ENCODE measurements at regions of chr19 and their contacts with region 1.

Region 1: GRCh38 chr19:38647368-38647965 is at the start of gene ACTN4:
- DNase-seq: peak; percentile 100
- H3K4me3 Mint-ChIP-seq: peak within 1 kb of the TSS; percentile 89
- H3K27ac Mint-ChIP-seq: peak within 1 kb of the TSS; percentile 80
- H3K4me1 Mint-ChIP-seq: peaks cover 45% of the 10 kb centered on the region
- H3K27me3 Mint-ChIP-seq: no peaks in the 10 kb centered on the region
- total RNA-seq, gene ACTN4: 532 to 534 TPM

Region 2: DNA sequence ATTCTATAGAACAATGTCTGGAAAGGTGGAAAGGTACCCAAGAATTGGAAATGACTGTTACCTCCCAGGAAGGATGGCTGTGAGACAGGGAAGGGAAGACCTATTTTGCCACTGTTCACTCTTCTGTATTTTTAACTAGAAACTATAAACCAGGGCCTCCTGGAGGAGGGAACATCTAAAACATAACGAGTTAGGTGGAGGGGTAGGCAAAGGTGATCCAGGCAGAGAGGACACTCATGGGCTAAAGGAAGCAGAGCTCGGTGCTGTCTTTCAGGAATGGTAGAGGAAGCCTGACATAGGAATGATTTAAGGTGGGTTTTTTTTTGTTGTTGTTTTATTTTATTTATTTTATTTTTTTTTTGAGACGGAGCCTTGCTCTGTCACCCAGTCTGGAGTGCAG is 22.6 kb before region 1 on chr19:
- CTCF ChIA-PET with region 1: no interaction called
- POLR2A ChIA-PET with region 1: no interaction called
- DNase-seq: no peak
- H3K4me3 Mint-ChIP-seq: no peak overlapping the region
- H3K27ac Mint-ChIP-seq: peak overlapping the region; percentile 21
- H3K4me1 Mint-ChIP-seq: peaks cover 12% of the 10 kb centered on the region
- H3K27me3 Mint-ChIP-seq: no peaks in the 10 kb centered on the region

Region 3: GRCh38 chr19:38634757-38635482 is 12.5 kb before region 1 on chr19:
- CTCF ChIA-PET with region 1: interaction called, 34 read pairs
- POLR2A ChIA-PET with region 1: interaction called, 30 read pairs
- DNase-seq: peak; percentile 81
- H3K4me3 Mint-ChIP-seq: no peak overlapping the region
- H3K27ac Mint-ChIP-seq: peak overlapping the region; percentile 87
- H3K4me1 Mint-ChIP-seq: peaks cover 50% of the 10 kb centered on the region
- H3K27me3 Mint-ChIP-seq: no peaks in the 10 kb centered on the region

Region 4: DNA sequence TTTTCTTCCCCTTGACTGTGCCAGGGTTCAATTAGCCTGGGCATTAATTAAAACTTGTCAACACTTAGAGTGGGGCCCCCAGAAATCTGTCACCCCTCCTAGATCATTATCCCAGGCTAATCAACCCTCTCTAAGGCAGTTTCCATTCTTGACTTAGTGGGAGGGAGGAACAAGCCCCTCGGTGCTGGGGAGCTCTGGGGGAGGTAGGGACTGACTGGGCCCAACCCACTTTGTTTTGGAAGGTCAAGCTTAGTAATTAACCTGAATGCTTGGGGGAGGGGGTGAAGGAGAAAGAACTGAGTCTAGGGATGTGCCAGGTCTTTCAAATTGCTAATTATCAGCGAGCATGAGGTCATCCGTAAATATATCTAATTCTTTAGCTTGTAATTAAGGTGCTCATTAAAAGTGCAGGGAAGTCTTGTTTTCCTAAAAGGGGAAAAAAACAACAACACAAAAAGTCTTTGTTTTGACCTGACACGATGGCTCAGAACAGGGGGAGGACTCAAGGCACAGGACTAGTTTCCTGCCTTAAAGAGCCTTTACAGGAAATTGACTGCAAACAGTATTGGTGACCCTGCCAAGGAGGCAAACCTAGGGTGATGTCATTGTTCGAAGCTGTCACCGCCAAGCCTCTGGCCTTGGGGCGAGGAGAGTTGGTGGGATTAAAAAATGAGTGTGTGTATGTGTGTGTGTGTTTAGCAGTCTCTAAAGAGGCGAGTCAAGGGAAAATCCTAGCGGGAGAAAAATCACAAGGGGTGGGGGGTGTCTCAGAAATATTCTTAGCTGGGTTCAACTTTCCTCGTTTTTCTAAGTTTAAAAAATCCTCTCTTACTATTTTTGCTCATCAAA is 19.4 kb after region 1 on chr19:
- CTCF ChIA-PET with region 1: interaction called, 6 read pairs
- POLR2A ChIA-PET with region 1: interaction called, 24 read pairs
- DNase-seq: peak; percentile 68
- H3K4me3 Mint-ChIP-seq: peak overlapping the region; percentile 57
- H3K27ac Mint-ChIP-seq: peak overlapping the region; percentile 93
- H3K4me1 Mint-ChIP-seq: peaks cover 93% of the 10 kb centered on the region
- H3K27me3 Mint-ChIP-seq: no peaks in the 10 kb centered on the region

Region 5: DNA sequence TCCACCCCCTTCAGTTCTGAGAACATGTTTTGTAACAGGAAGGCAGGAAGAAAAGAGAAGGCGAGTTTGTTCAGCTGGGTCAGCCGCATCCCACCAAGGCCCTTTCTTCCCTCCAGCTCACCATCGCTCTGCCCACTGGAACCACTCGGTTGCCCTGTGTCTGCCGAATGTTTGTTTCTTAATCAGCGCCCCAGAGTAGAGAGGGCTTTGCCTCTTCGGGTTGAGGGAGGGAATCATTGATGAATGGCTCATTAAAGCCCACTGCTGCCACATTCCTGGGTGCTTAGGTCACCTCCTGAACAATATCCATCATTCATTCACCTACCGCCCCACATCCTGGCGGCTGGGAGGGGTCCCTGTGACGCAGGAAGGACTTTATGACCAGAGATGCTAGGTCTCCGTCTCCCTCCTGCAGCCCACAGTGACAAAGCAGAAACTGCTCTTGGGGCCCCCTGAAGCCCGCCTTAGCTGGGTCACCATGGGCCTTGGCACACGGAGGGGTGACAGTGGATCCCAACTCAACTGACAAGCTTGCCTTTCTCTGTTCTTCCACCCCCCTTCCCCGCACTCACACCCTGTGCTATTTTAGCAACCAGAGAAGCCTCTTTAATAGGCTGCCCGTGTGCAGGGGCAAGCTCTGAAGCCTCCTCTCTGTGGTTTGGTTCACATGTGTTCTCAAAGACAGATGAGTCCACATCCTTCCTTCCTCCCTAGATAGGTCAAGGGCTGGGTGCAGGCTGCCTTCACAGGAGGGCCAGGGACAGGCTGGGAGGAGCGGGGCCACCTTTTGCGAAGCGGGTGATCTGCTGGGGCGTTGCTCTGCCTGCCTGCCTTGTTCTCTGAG is 46.1 kb after region 1 on chr19:
- CTCF ChIA-PET with region 1: interaction called, 4 read pairs
- POLR2A ChIA-PET with region 1: interaction called, 18 read pairs
- DNase-seq: peak; percentile 74
- H3K4me3 Mint-ChIP-seq: peak overlapping the region; percentile 23
- H3K27ac Mint-ChIP-seq: peak overlapping the region; percentile 91
- H3K4me1 Mint-ChIP-seq: peaks cover 97% of the 10 kb centered on the region
- H3K27me3 Mint-ChIP-seq: no peaks in the 10 kb centered on the region

Measured in activated CD4-positive, alpha-beta memory T cell treated with anti-CD3 and anti-CD28 coated beads, Interleukin-2, amount 10 ng/mL, durations not matched to agents 7 days and 5 days (primary cell).